ENCODE measurements at regions of chr13 and their contacts with region 1.

Region 1: GRCh38 chr13:37306778-37307544 is 201.5 kb upstream of the CSNK1A1L start:
- DNase-seq: peak; percentile 88
- ATAC-seq: peak; percentile 99
- H3K4me3 ChIP-seq: no peak overlapping the region
- H3K27ac ChIP-seq: no peak overlapping the region
- H3K4me1 ChIP-seq: peaks cover 8% of the 10 kb centered on the region
- H3K27me3 ChIP-seq: no peaks in the 10 kb centered on the region
- CTCF ChIP-seq: no peak

Region 2: GRCh38 chr13:37194428-37194861 is 112.5 kb before region 1 on chr13:
- CTCF ChIA-PET with region 1: no interaction called
- POLR2A ChIA-PET with region 1: no interaction called
- intact Hi-C with region 1: loop called (anchors 10 kb)
- DNase-seq: peak; percentile 88
- ATAC-seq: peak; percentile 92
- H3K4me3 ChIP-seq: no peak overlapping the region
- H3K27ac ChIP-seq: peak overlapping the region; percentile 68
- H3K4me1 ChIP-seq: peaks cover 15% of the 10 kb centered on the region
- H3K27me3 ChIP-seq: no peaks in the 10 kb centered on the region
- CTCF ChIP-seq: no peak

Region 3: GRCh38 chr13:37288057-37288720 is 18.8 kb before region 1 on chr13:
- CTCF ChIA-PET with region 1: no interaction called
- POLR2A ChIA-PET with region 1: no interaction called
- intact Hi-C with region 1: loop called (anchors 2 kb)
- DNase-seq: no peak
- ATAC-seq: no peak
- H3K4me3 ChIP-seq: no peak overlapping the region
- H3K27ac ChIP-seq: no peak overlapping the region
- H3K4me1 ChIP-seq: no peaks in the 10 kb centered on the region
- H3K27me3 ChIP-seq: no peaks in the 10 kb centered on the region
- CTCF ChIP-seq: no peak

Region 4: DNA sequence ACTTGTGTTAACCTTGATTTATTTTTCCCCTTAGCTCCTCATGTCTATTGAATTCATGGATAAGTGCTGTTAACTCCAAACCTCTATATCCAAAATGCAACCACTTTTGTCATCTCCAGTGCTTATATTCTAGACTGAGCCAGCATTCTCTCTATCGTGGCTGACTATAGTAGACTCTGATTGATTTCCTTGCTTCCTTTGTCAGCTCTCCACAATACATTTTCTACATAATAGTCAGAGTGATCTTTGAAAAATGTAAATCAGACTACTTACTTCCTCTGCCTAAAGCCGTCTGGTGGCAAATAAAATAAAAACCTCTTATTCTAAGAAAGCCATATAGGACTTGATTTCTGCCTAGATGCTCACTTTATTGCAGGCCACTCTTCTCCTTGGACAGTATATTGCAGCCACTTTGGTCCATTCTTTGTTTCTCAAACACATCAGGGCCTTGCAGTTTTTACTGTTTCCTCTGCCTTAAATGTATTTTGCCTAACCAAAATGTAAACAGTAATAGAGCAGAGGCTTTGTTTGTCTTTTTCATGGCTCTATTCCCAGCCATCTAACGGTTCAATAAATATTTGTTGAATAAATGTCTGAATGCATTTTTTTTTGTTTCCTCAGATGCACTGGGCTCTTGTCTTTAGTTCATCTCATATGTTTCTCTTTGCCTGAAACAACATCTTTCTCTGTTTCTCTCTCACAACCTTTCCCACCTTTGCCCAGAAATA is 42.1 kb after region 1 on chr13:
- CTCF ChIA-PET with region 1: no interaction called
- POLR2A ChIA-PET with region 1: no interaction called
- intact Hi-C with region 1: loop called (anchors 2 kb)
- DNase-seq: no peak
- ATAC-seq: peak; percentile 78
- H3K4me3 ChIP-seq: no peak overlapping the region
- H3K27ac ChIP-seq: no peak overlapping the region
- H3K4me1 ChIP-seq: no peaks in the 10 kb centered on the region
- H3K27me3 ChIP-seq: no peaks in the 10 kb centered on the region
- CTCF ChIP-seq: no peak

Region 5: DNA sequence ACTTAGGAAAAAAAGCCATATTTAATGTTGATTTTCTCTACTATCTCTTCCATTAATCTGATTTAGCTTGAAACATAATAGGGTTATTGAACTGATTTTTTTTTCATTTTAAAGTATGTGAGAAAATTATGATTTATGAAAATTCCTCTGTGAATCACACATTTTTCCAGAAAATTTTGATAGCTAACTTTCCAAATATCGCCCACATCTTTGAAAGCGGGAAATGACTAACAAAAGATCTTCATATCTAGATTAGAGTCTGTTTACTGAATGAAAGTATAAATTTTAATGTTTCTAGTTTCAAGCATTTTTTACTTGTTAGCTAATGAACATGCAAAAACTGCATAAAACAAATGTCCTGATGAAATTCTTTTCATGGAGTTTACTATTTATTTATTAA is 194.2 kb after region 1 on chr13:
- CTCF ChIA-PET with region 1: no interaction called
- POLR2A ChIA-PET with region 1: no interaction called
- intact Hi-C with region 1: no loop called
- DNase-seq: no peak
- ATAC-seq: no peak
- H3K4me3 ChIP-seq: no peak overlapping the region
- H3K27ac ChIP-seq: no peak overlapping the region
- H3K4me1 ChIP-seq: no peaks in the 10 kb centered on the region
- H3K27me3 ChIP-seq: no peaks in the 10 kb centered on the region
- CTCF ChIP-seq: no peak

Measured in PC-3 (cell line).